Activated B cell treated with CpG ODN at 0.5 μM for 24 hours (primary cell): ENCODE measurements at regions of chr15 and their contacts with region 1.

Region 1: GRCh38 chr15:41230650-41231533 is at the starts of genes CHP1 and EXD1:
- DNase-seq: peak; percentile 93
- ATAC-seq: peak; percentile 98
- H3K4me3 Mint-ChIP-seq: peak within 1 kb of the TSS; percentile 91
- H3K27ac Mint-ChIP-seq: peak within 1 kb of the TSS; percentile 81
- H3K4me1 Mint-ChIP-seq: peaks cover 28% of the 10 kb centered on the region
- H3K27me3 Mint-ChIP-seq: no peaks in the 10 kb centered on the region
- CTCF ChIP-seq: peak; percentile 99
- total RNA-seq, gene CHP1: 47.9 and 58.5 TPM in 2 replicates
- total RNA-seq, gene EXD1: not detected in 2 replicates

Region 2: GRCh38 chr15:40952901-40953712 is 277.8 kb before region 1 on chr15 and contains the start of gene CHAC1:
- CTCF ChIA-PET with region 1: no interaction called
- POLR2A ChIA-PET with region 1: interaction called, 8 read pairs
- intact Hi-C with region 1: loop called (anchors 1 kb)
- DNase-seq: peak; percentile 88
- ATAC-seq: peak; percentile 94
- H3K4me3 Mint-ChIP-seq: peak within 1 kb of the TSS; percentile 93
- H3K27ac Mint-ChIP-seq: peak within 1 kb of the TSS; percentile 92
- H3K4me1 Mint-ChIP-seq: peaks cover 23% of the 10 kb centered on the region
- H3K27me3 Mint-ChIP-seq: peaks cover 7% of the 10 kb centered on the region
- CTCF ChIP-seq: no peak
- total RNA-seq, gene CHAC1: 22.3 and 27.3 TPM in 2 replicates

Region 3: DNA sequence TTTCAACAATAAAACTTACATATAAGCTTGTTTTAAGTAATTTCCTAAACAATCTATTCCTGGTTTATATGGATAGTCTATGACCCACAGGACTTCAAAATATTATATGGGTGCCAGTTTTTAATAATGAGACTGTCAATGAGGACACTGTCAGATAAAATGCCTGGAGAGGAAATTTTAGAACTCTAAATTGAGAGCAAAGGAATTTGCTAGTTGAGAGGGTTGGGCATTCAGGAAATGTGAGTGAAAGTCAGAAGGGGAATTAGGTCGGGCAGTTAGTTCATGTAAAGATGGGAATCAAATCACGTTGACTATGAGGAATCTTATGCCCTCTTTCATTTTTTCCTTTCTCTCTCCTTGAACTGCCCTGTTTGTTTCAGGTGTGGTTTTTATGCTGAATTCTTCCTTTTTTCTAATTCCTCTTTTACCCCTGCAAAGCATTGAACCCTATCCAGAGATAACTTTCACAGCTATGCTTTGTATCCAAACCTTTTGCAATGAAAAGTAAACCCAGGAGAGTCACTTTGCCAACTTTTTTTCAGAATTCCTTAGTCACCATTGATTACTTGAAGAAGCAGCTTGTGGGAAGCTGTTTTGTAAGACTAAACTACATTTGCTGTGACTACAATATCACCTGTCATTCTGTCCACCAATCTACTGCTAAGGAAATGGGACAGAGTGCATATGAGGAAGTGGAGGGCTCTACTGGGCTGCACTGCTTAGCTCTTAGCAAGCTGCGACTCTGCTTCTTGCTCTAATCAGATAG is 28.0 kb after region 1 on chr15:
- CTCF ChIA-PET with region 1: interaction called, 4 read pairs
- POLR2A ChIA-PET with region 1: interaction called, 3 read pairs
- intact Hi-C with region 1: loop called (anchors 1 kb)
- DNase-seq: no peak
- ATAC-seq: peak; percentile 91
- H3K4me3 Mint-ChIP-seq: peak overlapping the region; percentile 52
- H3K27ac Mint-ChIP-seq: peak overlapping the region; percentile 76
- H3K4me1 Mint-ChIP-seq: peaks cover 27% of the 10 kb centered on the region
- H3K27me3 Mint-ChIP-seq: no peaks in the 10 kb centered on the region
- CTCF ChIP-seq: no peak

Region 4: DNA sequence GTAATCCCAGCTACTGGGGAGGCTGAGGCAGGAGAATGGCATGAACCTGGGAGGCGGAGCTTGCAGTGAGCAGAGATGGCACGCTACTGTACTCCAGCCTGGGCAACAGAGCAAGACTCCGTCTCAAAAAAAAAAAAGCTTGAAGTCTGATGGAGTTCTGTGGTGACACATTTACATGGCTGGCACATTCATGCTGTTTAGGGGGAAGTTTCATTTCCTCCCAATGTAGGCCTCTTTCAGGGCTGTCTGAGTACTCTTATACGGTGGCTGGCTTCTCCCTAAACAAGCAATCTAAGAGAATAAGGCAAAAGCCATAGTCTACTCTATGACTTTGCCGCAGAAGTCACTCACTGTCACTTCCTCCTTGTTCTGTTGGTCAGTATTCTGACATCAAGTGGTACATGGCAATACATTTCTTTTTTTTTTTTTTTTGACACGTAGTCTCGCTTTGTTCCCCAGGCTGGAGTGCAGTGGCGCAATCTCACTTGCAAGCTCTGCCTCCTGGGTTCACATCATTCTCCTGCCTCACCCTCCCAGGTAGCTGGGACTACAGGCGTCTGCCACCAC is 60.3 kb after region 1 on chr15:
- CTCF ChIA-PET with region 1: interaction called, 6 read pairs
- POLR2A ChIA-PET with region 1: interaction called, 14 read pairs
- intact Hi-C with region 1: loop called (anchors 1 kb)
- DNase-seq: peak; percentile 25
- ATAC-seq: peak; percentile 94
- H3K4me3 Mint-ChIP-seq: peak overlapping the region; percentile 57
- H3K27ac Mint-ChIP-seq: peak overlapping the region; percentile 89
- H3K4me1 Mint-ChIP-seq: peaks cover 40% of the 10 kb centered on the region
- H3K27me3 Mint-ChIP-seq: no peaks in the 10 kb centered on the region
- CTCF ChIP-seq: no peak

Region 5: DNA sequence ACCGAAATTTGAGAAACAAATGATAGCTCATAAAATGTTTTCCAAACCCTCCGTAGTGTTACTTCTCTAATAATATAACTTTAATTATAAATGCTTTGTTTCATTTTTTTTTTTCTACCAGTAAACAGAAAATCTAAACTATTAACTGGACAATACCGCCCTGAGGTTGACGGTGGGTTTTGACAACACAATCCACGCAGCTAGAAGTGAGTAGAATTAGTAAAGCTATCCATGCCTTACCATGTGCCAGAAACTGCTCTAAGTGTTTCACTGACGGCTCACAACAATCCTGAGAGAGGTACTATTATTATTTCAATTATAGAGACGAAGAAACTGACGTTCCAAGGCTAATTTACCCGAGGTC is 171.0 kb after region 1 on chr15:
- CTCF ChIA-PET with region 1: no interaction called
- POLR2A ChIA-PET with region 1: interaction called, 3 read pairs
- intact Hi-C with region 1: loop called (anchors 1 kb)
- DNase-seq: no peak
- ATAC-seq: no peak
- H3K4me3 Mint-ChIP-seq: peak overlapping the region; percentile 93
- H3K27ac Mint-ChIP-seq: peak overlapping the region; percentile 94
- H3K4me1 Mint-ChIP-seq: peaks cover 16% of the 10 kb centered on the region
- H3K27me3 Mint-ChIP-seq: no peaks in the 10 kb centered on the region
- CTCF ChIP-seq: no peak